CD14-positive monocyte (primary cell): ENCODE measurements at regions of chr21 and their contacts with region 1.

Region 1: GRCh38 chr21:34029743-34030528 is 43.4 kb upstream of the MRPS6 start:
- DNase-seq: peak; percentile 43 to 73 (median 47)
- H3K4me3 ChIP-seq: no peak overlapping the region
- H3K4me3 Mint-ChIP-seq: peak overlapping the region in 1 of 2 donors; percentile 89
- H3K27ac ChIP-seq: no peak overlapping the region
- H3K27ac Mint-ChIP-seq: peak overlapping the region in 2 of 7 donors; percentile 30 to 79
- H3K4me1 ChIP-seq: peaks cover 12% of the 10 kb centered on the region in 2 donors
- H3K4me1 Mint-ChIP-seq: peaks cover 7% of the 10 kb centered on the region
- H3K27me3 ChIP-seq: peaks cover 0 to 2% of the 10 kb centered on the region in 2 donors
- H3K27me3 Mint-ChIP-seq: peaks cover 1 to 14% (median 5%) of the 10 kb centered on the region in 3 donors
- CTCF ChIP-seq: no peak

Region 2: GRCh38 chr21:33836408-33836807 is 193.5 kb before region 1 on chr21:
- intact Hi-C with region 1: no loop called
- DNase-seq: no peak
- H3K4me3 ChIP-seq: no peak overlapping the region
- H3K4me3 Mint-ChIP-seq: no peak overlapping the region
- H3K27ac ChIP-seq: no peak overlapping the region
- H3K27ac Mint-ChIP-seq: peak overlapping the region in 1 of 7 donors; percentile 63
- H3K4me1 ChIP-seq: no peaks in the 10 kb centered on the region
- H3K4me1 Mint-ChIP-seq: no peaks in the 10 kb centered on the region
- H3K27me3 ChIP-seq: no peaks in the 10 kb centered on the region
- H3K27me3 Mint-ChIP-seq: peaks cover 0 to 2% (median 0%) of the 10 kb centered on the region in 3 donors
- CTCF ChIP-seq: no peak

Region 3: GRCh38 chr21:33947451-33948095 is 82.4 kb before region 1 on chr21:
- intact Hi-C with region 1: loop called in 1 of 2 experiments (anchors 10 kb)
- DNase-seq: peak; percentile 85 to 96 (median 91)
- H3K4me3 ChIP-seq: peak overlapping the region in 1 of 3 experiments; percentile 25
- H3K4me3 Mint-ChIP-seq: peak overlapping the region; percentile 50 to 69
- H3K27ac ChIP-seq: peak overlapping the region; percentile 24 to 71
- H3K27ac Mint-ChIP-seq: peak overlapping the region; percentile 88 to 97 (median 91)
- H3K4me1 ChIP-seq: peaks cover 23 to 26% of the 10 kb centered on the region in 2 donors
- H3K4me1 Mint-ChIP-seq: peaks cover 41% of the 10 kb centered on the region
- H3K27me3 ChIP-seq: no peaks in the 10 kb centered on the region
- H3K27me3 Mint-ChIP-seq: peaks cover under 1 to 5% (median 2%) of the 10 kb centered on the region in 3 donors
- CTCF ChIP-seq: no peak